Gastrocnemius medialis (tissue), 4 donors: ENCODE measurements at regions of chr1 and their contacts with region 1.

Region 1: DNA sequence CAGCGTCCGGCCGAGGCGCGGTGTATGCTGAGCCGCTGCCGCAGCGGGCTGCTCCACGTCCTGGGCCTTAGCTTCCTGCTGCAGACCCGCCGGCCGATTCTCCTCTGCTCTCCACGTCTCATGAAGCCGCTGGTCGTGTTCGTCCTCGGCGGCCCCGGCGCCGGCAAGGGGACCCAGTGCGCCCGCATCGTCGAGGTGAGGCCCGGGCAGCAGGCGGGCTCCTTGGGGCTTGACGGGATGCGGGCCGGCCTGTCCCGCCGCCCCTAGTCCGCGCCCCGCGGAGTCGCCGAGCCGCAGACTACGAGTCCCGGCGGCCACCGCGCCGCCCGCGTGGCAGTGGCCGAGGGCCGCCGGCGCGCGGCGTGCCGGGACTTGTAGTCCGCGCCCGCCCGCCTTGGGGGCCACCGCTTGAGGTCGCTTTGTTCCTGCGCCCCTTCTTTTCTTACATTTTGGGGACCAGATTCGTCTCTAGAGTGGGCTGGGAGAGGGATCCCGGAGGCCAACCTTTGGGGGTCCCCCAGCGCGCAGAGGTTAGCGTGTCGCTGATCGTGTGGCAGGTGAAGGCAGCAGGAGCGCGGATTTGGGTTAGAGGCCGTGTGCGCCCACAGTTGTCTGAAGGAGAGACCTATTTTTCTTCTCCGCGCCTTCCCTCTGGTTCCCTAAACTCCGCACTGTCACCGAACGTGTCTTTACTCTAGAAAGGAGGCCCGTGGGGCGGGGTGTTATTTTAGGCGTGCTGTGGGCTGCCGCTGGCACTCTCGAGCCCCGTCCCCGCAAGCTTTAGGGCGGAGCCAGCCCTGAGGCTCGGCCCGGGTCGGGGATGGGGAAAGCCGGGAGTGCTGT is 553 bp downstream of the CMPK1 start:
- DNase-seq: peak; percentile 65 to 83
- ATAC-seq: peak; percentile 90 to 92
- H3K4me3 ChIP-seq: peak overlapping the region; percentile 72 to 99 (median 92)
- H3K27ac ChIP-seq: peak overlapping the region; percentile 93 to 100 (median 98)
- H3K4me1 ChIP-seq: peaks cover 28 to 39% of the 10 kb centered on the region in 2 donors
- H3K27me3 ChIP-seq: no peaks in the 10 kb centered on the region
- CTCF ChIP-seq: peak in 2 of 5 experiments; percentile 40 to 46
- POLR2A ChIP-seq: peak; percentile 73 to 76

Region 2: DNA sequence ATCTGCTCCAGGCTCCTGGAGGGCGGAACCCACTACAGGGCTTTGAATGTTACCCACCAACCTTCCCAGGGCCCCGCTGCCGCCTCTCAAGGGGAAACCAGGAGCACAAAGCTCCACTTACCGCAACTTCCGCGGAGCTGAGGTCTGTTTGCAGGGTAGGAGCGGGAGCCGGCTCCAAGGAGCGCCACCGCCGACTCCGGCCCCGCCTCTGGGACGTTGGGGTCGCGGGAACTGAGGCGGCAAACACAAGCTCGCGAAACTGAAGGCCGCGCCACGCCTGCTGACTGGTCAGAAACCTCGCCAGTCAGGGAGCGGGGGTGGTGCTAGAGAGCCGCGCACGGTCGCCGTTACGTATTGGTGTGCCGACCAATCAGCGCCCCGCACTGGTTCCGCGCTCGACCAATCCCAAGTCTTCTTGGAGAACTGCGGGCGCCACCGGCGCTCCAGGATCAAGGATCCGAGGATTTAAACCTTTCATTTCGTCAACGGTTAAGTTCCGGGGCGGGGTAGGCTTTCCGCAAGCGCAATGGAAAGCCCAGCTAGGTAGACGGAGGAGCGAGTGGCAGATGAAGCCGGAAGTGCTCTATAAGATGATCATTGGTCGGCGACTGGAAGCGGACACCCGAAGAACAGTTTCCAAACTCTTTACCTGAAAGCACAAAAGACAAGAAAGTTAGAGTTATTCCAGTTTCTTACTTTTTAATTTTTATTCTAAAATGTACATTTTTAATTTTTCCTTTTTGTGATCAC is 20.1 kb before region 1 on chr1 and contains the start of gene STIL:
- in situ Hi-C with region 1: no loop called
- intact Hi-C with region 1: loop called (anchors 1 kb)
- DNase-seq: peak; percentile 98
- ATAC-seq: peak; percentile 100
- H3K4me3 ChIP-seq: peak within 1 kb of the TSS; percentile 60 to 78 (median 68)
- H3K27ac ChIP-seq: peak within 1 kb of the TSS; percentile 74 to 88 (median 80)
- H3K4me1 ChIP-seq: peaks cover 6 to 11% of the 10 kb centered on the region in 2 donors
- H3K27me3 ChIP-seq: no peaks in the 10 kb centered on the region
- CTCF ChIP-seq: peak in 2 of 5 experiments; percentile 9 to 25
- POLR2A ChIP-seq: peak; percentile 32 to 52
- total RNA-seq, gene STIL: 0.33 to 1.1 (median 0.63) TPM

Region 3: GRCh38 chr1:47362828-47363227 is 28.7 kb after region 1 on chr1:
- in situ Hi-C with region 1: no loop called
- intact Hi-C with region 1: no loop called
- DNase-seq: no peak
- ATAC-seq: no peak
- H3K4me3 ChIP-seq: no peak overlapping the region
- H3K27ac ChIP-seq: no peak overlapping the region
- H3K4me1 ChIP-seq: peaks cover 5 to 7% of the 10 kb centered on the region in 2 donors
- H3K27me3 ChIP-seq: no peaks in the 10 kb centered on the region
- CTCF ChIP-seq: no peak
- POLR2A ChIP-seq: no peak